Heart right ventricle (tissue), 16 donors: ENCODE measurements at regions of chr2 and their contacts with region 1.

Region 1: GRCh38 chr2:120949027-120949956 is 213.6 kb downstream of the GLI2 start:
- DNase-seq: no peak
- ATAC-seq: peak in 1 of 8 donors; percentile 35
- H3K4me3 ChIP-seq: no peak overlapping the region
- H3K27ac ChIP-seq: no peak overlapping the region
- H3K4me1 ChIP-seq: no peaks in the 10 kb centered on the region
- H3K27me3 ChIP-seq: no peaks in the 10 kb centered on the region
- CTCF ChIP-seq: peak in 4 of 9 donors; percentile 14 to 37 (median 26)

Region 2: DNA sequence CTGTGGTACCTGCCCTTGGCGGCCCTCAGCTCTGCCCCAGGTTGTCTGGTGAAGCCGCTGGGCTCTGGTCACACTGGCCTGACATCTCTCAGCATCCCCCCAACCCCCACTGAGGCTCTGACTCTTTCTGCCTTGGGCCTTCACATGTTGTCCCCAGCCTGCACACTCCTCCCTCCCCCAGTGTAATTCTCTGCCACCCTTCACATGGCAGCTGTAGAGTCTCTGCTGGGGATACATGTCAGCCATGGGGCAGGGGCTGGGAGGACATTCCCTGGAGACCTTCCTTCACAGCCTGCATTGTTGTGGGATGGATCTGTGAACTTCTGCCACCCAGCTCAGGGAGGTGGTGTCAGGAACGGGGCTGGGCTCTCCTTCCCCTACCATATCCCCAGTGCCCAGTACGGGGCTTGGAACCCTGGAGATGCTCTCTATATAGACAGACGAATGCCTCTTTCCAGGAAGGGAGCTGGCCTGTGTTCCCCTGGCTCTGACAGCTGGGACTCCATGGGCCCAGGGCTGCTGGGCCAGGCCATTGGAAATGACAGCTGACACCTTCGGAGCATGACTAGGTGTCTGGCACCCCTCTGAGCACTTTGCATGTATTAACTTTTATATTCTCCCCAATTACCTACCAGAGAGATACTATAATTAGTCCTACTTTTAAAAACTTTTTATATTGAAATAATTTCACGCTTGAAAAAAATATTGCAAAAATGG is 451.9 kb before region 1 on chr2:
- intact Hi-C with region 1: no loop called
- DNase-seq: no peak
- ATAC-seq: peak in 4 of 8 donors; percentile 39 to 62 (median 52)
- H3K4me3 ChIP-seq: no peak overlapping the region
- H3K27ac ChIP-seq: no peak overlapping the region
- H3K4me1 ChIP-seq: no peaks in the 10 kb centered on the region
- H3K27me3 ChIP-seq: peaks cover 0 to 5% (median 0%) of the 10 kb centered on the region in 7 donors
- CTCF ChIP-seq: no peak

Region 3: GRCh38 chr2:120740765-120741524 is 208.3 kb before region 1 on chr2:
- intact Hi-C with region 1: loop called in 3 of 10 experiments (anchors 10 kb)
- DNase-seq: no peak
- ATAC-seq: peak in 3 of 8 donors; percentile 24 to 27 (median 25)
- H3K4me3 ChIP-seq: peak overlapping the region in 7 of 10 donors; percentile 37 to 48 (median 40)
- H3K27ac ChIP-seq: peak overlapping the region in 6 of 10 donors; percentile 9 to 64 (median 48)
- H3K4me1 ChIP-seq: peaks cover 2 to 23% (median 11%) of the 10 kb centered on the region in 9 donors
- H3K27me3 ChIP-seq: peaks cover 4 to 94% (median 84%) of the 10 kb centered on the region in 7 donors
- CTCF ChIP-seq: no peak

Region 4: DNA sequence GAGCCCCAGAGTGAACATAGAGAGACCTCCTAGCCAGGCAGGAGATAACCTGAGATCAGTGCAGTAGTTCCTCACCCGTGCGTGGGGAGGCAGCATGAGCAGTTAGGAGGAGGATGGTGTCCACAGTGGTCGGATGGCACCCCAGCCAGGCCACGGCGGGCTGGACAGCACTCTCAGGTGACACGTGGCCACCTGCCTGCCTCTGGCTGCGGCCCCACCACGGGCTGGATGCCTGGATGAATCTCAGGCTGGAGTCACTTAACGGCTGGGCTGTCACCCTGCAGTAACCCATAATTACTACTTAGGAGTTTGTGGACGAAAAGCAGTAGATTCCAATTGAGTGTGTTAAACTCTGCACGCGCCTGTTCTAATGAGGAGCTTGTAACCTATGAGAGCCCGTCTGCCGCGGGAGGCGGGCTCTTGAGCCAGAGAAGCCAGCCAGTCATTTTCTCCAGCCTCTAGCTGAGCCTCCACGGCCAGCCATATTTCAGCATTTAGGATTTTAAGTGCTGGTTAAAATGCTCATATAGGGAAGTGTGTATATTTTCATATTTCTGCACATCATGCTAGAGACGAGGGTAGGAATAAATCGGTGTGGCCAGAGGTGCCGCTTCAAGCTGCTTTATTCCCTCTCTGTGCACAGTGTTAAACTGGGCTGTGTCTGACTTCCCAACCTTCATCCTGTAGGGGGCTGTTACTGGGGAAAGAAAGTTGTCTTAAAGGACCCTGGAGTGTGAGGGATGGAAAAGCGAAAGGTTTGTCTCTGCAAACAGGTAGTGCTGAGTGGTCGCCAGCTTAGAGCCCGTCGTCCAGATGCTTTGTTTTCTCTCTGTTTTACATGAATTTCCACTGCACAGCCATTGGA is 69.6 kb before region 1 on chr2:
- intact Hi-C with region 1: loop called in 1 of 10 experiments (anchors 5 kb)
- DNase-seq: no peak
- ATAC-seq: no peak
- H3K4me3 ChIP-seq: no peak overlapping the region
- H3K27ac ChIP-seq: no peak overlapping the region
- H3K4me1 ChIP-seq: peaks cover 0 to 14% (median 0%) of the 10 kb centered on the region in 9 donors
- H3K27me3 ChIP-seq: peaks cover 0 to 2% (median 0%) of the 10 kb centered on the region in 7 donors
- CTCF ChIP-seq: no peak

Region 5: DNA sequence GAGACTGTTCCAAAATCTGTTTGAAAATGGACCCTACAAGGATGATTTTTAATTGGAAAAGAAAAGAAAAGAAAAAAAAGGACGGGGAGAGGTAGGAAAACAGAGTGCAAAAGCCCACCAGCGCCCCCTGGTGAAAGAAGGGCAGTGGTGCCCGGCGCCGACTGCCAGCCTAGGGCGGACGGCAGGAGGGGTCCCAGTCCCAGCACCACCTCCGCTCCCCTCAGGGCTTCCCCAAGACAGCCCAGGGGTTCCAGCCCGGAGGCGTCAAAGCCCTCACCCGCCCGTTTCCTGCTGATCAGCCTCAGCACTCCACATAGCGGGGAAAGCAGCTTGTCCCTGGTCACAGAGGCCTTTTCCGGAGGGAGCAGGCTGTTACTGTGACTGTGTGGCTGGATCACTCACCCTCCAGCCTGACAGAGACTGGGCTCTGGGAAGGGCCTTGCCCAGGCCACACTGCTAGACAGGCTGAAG is 121.8 kb after region 1 on chr2:
- intact Hi-C with region 1: loop called in 1 of 10 experiments (anchors 10 kb)
- DNase-seq: peak; percentile 41 to 74
- ATAC-seq: peak in 7 of 8 donors; percentile 36 to 77 (median 66)
- H3K4me3 ChIP-seq: no peak overlapping the region
- H3K27ac ChIP-seq: no peak overlapping the region
- H3K4me1 ChIP-seq: peaks cover 0 to 23% (median 3%) of the 10 kb centered on the region in 9 donors
- H3K27me3 ChIP-seq: peaks cover 0 to 53% (median 35%) of the 10 kb centered on the region in 7 donors
- CTCF ChIP-seq: peak; percentile 78 to 99 (median 92)